T-cell (primary cell): ENCODE measurements at regions of chr18 and their contacts with region 1.

Region 1: GRCh38 chr18:23828426-23828825 is 139.2 kb downstream of the LAMA3 start:
- DNase-seq: peak in 29 of 35 experiments; percentile 13 to 82 (median 38)
- ATAC-seq: peak; percentile 97 to 100 (median 99)
- H3K4me3 ChIP-seq: no peak overlapping the region
- H3K4me3 Mint-ChIP-seq: no peak overlapping the region
- H3K27ac ChIP-seq: peak overlapping the region; percentile 65
- H3K27ac Mint-ChIP-seq: peak overlapping the region; percentile 30 to 62
- H3K4me1 ChIP-seq: peaks cover 0 to 13% of the 10 kb centered on the region in 2 experiments
- H3K4me1 Mint-ChIP-seq: peaks cover 20 to 35% (median 34%) of the 10 kb centered on the region in 3 donors
- H3K27me3 ChIP-seq: no peaks in the 10 kb centered on the region
- H3K27me3 Mint-ChIP-seq: no peaks in the 10 kb centered on the region

Region 2: GRCh38 chr18:23918401-23919032 is 90.1 kb after region 1 on chr18:
- CTCF ChIA-PET with region 1: interaction called, 3 to 14 read pairs
- POLR2A ChIA-PET with region 1: no interaction called
- DNase-seq: peak; percentile 35 to 89 (median 71)
- ATAC-seq: peak; percentile 69 to 81 (median 75)
- H3K4me3 ChIP-seq: no peak overlapping the region
- H3K4me3 Mint-ChIP-seq: no peak overlapping the region
- H3K27ac ChIP-seq: no peak overlapping the region
- H3K27ac Mint-ChIP-seq: no peak overlapping the region
- H3K4me1 ChIP-seq: peaks cover 13 to 17% of the 10 kb centered on the region in 2 experiments
- H3K4me1 Mint-ChIP-seq: peaks cover 26 to 35% (median 33%) of the 10 kb centered on the region in 3 donors
- H3K27me3 ChIP-seq: no peaks in the 10 kb centered on the region
- H3K27me3 Mint-ChIP-seq: no peaks in the 10 kb centered on the region

Region 3: GRCh38 chr18:24138789-24139616 is 310.6 kb after region 1 on chr18 and contains the start of gene CABYR:
- CTCF ChIA-PET with region 1: no interaction called
- POLR2A ChIA-PET with region 1: no interaction called
- DNase-seq: peak; percentile 45 to 84 (median 76)
- ATAC-seq: peak; percentile 87 to 95 (median 90)
- H3K4me3 ChIP-seq: peak within 1 kb of the TSS; percentile 50 to 74
- H3K4me3 Mint-ChIP-seq: peak within 1 kb of the TSS; percentile 84 to 93 (median 86)
- H3K27ac ChIP-seq: no peak within 1 kb of the TSS
- H3K27ac Mint-ChIP-seq: peak within 1 kb of the TSS; percentile 58 to 83
- H3K4me1 ChIP-seq: peaks cover 0 to 19% of the 10 kb centered on the region in 2 experiments
- H3K4me1 Mint-ChIP-seq: peaks cover 15 to 32% (median 29%) of the 10 kb centered on the region in 3 donors
- H3K27me3 ChIP-seq: peaks cover 2 to 23% of the 10 kb centered on the region in 2 experiments
- H3K27me3 Mint-ChIP-seq: peaks cover 6 to 12% of the 10 kb centered on the region in 2 donors
- total RNA-seq, gene CABYR: 0.25 to 2.4 (median 1.1) TPM